WTC11 (cell line): ENCODE measurements at regions of chr16 and their contacts with region 1.

Region 1: GRCh38 chr16:51532551-51532950 is 381.5 kb upstream of the SALL1 start:
- DNase-seq: no peak
- ATAC-seq: no peak
- H3K4me3 Mint-ChIP-seq: no peak overlapping the region
- H3K27ac Mint-ChIP-seq: no peak overlapping the region
- H3K4me1 Mint-ChIP-seq: peaks cover 19% of the 10 kb centered on the region
- H3K27me3 Mint-ChIP-seq: no peaks in the 10 kb centered on the region
- CTCF ChIP-seq: no peak

Region 2: GRCh38 chr16:51237861-51238378 is 294.6 kb before region 1 on chr16:
- CTCF ChIA-PET with region 1: no interaction called
- POLR2A ChIA-PET with region 1: interaction called, 12 read pairs
- DNase-seq: no peak
- ATAC-seq: peak; percentile 53
- H3K4me3 Mint-ChIP-seq: no peak overlapping the region
- H3K27ac Mint-ChIP-seq: no peak overlapping the region
- H3K4me1 Mint-ChIP-seq: peaks cover 34% of the 10 kb centered on the region
- H3K27me3 Mint-ChIP-seq: peaks cover 14% of the 10 kb centered on the region
- CTCF ChIP-seq: no peak

Region 3: GRCh38 chr16:51577621-51578303 is 45.2 kb after region 1 on chr16:
- CTCF ChIA-PET with region 1: no interaction called
- POLR2A ChIA-PET with region 1: no interaction called
- DNase-seq: no peak
- ATAC-seq: peak; percentile 93
- H3K4me3 Mint-ChIP-seq: no peak overlapping the region
- H3K27ac Mint-ChIP-seq: peak overlapping the region; percentile 68
- H3K4me1 Mint-ChIP-seq: peaks cover 26% of the 10 kb centered on the region
- H3K27me3 Mint-ChIP-seq: no peaks in the 10 kb centered on the region
- CTCF ChIP-seq: no peak